ENCODE measurements at regions of chrX and their contacts with region 1.

Region 1: DNA sequence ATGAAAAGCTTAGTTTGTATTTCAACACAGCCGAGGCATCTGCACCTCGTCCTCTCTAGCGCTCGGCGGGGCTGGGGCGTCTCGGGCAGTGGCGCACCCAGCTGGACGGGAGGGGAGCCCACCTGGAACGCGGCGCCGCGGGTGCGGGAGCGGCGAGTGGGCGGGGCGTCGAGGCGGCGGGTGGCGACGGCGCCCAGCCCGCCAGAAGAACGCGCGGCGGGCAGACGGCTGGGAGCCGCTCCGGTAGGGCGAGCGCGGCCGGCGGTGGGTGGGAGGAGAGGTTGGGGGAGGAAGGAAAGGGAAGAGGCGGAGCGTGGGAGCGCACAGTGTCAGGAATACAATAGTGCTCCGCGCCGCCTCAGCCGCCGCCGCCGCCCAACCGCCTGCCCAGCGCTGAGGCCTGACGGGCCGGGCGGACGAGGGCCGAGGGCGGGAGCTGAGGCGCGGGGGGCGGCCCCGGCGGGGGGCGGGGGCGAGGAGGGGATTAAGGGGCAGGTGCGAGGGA is at the start of gene JADE3:
- DNase-seq: peak; percentile 67 to 71
- ATAC-seq: peak; percentile 69 to 91 (median 88)
- H3K4me3 ChIP-seq: peak within 1 kb of the TSS; percentile 70
- H3K27ac ChIP-seq: peak within 1 kb of the TSS; percentile 50
- H3K4me1 ChIP-seq: no peaks in the 10 kb centered on the region
- H3K27me3 ChIP-seq: peaks cover 0 to 23% (median 0%) of the 10 kb centered on the region in 3 donors
- CTCF ChIP-seq: no peak
- total RNA-seq, gene JADE3: 1.3 to 2.8 (median 2.3) TPM

Region 2: DNA sequence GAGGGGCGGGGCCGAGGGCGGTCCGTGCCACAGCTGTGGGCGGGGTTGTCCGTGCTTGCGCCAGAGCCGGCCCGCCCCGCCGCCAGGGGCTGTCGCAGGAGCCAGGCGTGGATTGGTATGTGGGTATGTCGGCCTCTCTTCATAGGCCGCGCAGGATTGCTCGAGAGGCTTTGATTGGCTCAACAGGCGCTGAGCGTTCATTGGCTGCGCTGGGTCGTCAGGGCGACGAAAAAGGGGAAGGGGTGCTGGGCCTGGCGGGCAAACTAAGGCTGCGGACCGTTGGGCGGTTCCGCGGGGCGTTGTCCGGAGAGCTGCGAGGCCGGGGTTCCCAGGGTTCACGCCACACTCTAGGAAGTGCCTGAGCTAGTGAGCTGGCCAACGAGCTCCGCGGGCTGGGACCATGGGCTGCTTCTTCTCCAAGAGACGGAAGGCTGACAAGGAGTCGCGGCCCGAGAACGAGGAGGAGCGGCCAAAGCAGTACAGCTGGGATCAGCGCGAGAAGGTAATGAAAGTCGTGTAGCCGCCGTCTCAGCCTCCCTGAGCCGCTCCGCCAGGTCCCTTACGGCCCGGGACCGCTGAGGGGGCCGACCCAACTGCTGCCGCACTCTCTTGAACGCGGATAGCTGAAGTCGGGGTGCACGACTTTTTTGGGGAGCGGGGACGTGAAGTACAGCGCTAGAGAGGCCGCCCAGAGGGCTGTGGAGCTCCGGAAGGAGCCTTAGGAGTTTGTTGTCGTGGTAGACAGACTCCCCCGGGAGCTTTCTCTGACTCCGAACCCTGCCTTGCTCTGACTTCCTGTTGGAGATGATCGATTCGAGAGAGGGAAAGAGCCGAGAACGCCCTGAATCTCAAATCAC is 75.2 kb before region 1 on chrX and contains the start of gene RP2:
- intact Hi-C with region 1: loop called in 1 of 2 experiments (anchors 5 kb)
- DNase-seq: peak; percentile 88 to 94
- ATAC-seq: peak; percentile 99
- H3K4me3 ChIP-seq: peak within 1 kb of the TSS; percentile 84
- H3K27ac ChIP-seq: peak within 1 kb of the TSS; percentile 79
- H3K4me1 ChIP-seq: no peaks in the 10 kb centered on the region
- H3K27me3 ChIP-seq: no peaks in the 10 kb centered on the region
- CTCF ChIP-seq: no peak
- total RNA-seq, gene RP2: 1.6 to 2.4 (median 2.1) TPM

Region 3: DNA sequence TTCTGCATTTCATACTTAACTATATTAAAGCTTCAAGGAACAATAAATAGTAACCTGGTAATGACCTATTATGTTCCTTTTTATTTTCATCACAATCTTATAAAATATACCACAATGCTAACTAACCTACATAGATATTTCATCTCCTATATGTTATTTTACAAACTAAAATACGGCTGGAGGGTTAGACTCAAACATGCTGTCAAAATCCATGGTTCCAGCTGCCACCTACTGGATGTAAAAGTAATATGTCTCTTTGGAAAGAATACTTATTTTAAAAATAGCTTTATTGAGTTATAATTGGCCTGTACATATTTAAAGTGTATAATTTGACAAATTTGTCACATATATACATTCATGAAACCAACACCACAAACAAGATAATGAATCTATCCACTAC is 181.1 kb after region 1 on chrX:
- intact Hi-C with region 1: loop called in 1 of 2 experiments (anchors 5 kb)
- DNase-seq: no peak
- ATAC-seq: peak in 1 of 4 donors; percentile 58
- H3K4me3 ChIP-seq: no peak overlapping the region
- H3K27ac ChIP-seq: no peak overlapping the region
- H3K4me1 ChIP-seq: no peaks in the 10 kb centered on the region
- H3K27me3 ChIP-seq: peaks cover 0 to 2% (median 0%) of the 10 kb centered on the region in 3 donors
- CTCF ChIP-seq: peak; percentile 43

Measured in psoas muscle (tissue), 8 donors.